ENCODE measurements at regions of chr13 and their contacts with region 1.

Region 1: GRCh38 chr13:99374994-99375737 is 68.0 kb upstream of the GPR183 start:
- DNase-seq: no peak
- ATAC-seq: peak; percentile 83
- H3K4me3 ChIP-seq: peak overlapping the region; percentile 33; the same call in 1 of the 2 replicates
- H3K27ac ChIP-seq: peak overlapping the region; percentile 94
- H3K4me1 ChIP-seq: peaks cover 66% of the 10 kb centered on the region
- H3K27me3 ChIP-seq: no peaks in the 10 kb centered on the region
- CTCF ChIP-seq: 0 out of 6 replicates have a peak, but pooled peaks of 1 of the 3 experiments have one; percentile 0
- EP300 ChIP-seq: peak; percentile 85 to 91; a peak in 3 of 4 replicates
- POLR2A ChIP-seq: 0 out of 2 replicates have a peak, but pooled peaks have one; percentile 24
- RAD21 ChIP-seq: no peak

Region 2: GRCh38 chr13:98761126-98761985 is 613.8 kb before region 1 on chr13:
- CTCF ChIA-PET with region 1: no interaction called
- POLR2A ChIA-PET with region 1: no interaction called
- RAD21 ChIA-PET with region 1: no interaction called
- SMC1A ChIA-PET with region 1: no interaction called
- in situ Hi-C with region 1: no loop called
- intact Hi-C with region 1: no loop called
- DNase-seq: peak; percentile 11
- ATAC-seq: peak; percentile 92
- H3K4me3 ChIP-seq: peak overlapping the region; percentile 19; the same call in 1 of the 2 replicates
- H3K27ac ChIP-seq: no peak overlapping the region
- H3K4me1 ChIP-seq: no peaks in the 10 kb centered on the region; the same call in 1 of the 2 replicates
- H3K27me3 ChIP-seq: no peaks in the 10 kb centered on the region; a peak in 1 of 4 replicates
- CTCF ChIP-seq: no peak
- EP300 ChIP-seq: no peak
- POLR2A ChIP-seq: no peak
- RAD21 ChIP-seq: no peak

Region 3: GRCh38 chr13:99301913-99302636 is 73.1 kb before region 1 on chr13:
- CTCF ChIA-PET with region 1: interaction called, 9 read pairs
- POLR2A ChIA-PET with region 1: interaction called, 5 read pairs
- RAD21 ChIA-PET with region 1: interaction called, 28 read pairs
- SMC1A ChIA-PET with region 1: interaction called, 21 read pairs
- in situ Hi-C with region 1: no loop called
- intact Hi-C with region 1: loop called (anchors 2 kb)
- DNase-seq: no peak
- ATAC-seq: peak; percentile 39
- H3K4me3 ChIP-seq: peak overlapping the region; percentile 98
- H3K27ac ChIP-seq: peak overlapping the region; percentile 93
- H3K4me1 ChIP-seq: peaks cover 18% of the 10 kb centered on the region
- H3K27me3 ChIP-seq: no peaks in the 10 kb centered on the region
- CTCF ChIP-seq: no peak
- EP300 ChIP-seq: no peak
- POLR2A ChIP-seq: no peak
- RAD21 ChIP-seq: no peak

Region 4: DNA sequence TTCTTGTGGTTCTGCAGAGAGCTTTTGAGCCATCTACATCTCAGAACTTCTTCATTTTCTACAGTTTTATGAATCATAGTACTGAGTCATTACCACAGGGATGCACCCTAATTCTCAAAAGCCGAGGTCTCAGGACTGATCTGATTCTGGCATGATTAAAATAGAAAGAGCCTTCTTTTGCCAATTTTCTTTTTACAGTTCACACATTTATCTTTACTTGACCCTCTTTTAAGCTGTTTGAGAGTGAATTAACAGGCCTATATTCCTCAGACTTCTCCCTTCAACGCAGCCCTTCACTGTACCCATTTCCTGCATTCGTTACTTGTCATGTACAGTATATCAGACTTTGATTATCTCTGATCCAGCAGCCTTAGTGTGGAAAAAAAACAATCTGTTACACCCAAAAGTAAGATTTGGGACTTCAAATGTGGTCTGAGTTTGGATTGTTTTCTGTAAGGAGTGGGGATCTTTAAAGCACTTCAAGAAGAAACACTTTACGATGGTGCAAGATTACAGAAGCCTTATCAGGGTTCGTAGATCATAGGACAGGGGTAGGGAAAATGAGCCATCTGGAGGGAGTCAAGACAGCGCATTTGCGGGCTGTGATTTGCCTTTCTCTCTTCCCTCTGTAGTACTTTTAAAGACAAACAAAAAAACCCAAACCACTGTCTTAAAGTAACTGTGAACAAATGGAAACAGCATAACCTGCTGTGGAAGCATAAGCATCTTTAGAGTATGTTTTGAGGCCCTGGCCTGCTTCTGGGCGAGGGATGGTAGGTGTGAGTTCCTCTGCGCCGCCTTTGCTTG is 52.7 kb before region 1 on chr13:
- CTCF ChIA-PET with region 1: interaction called, 3 read pairs
- POLR2A ChIA-PET with region 1: interaction called, 4 read pairs
- RAD21 ChIA-PET with region 1: interaction called, 5 read pairs
- SMC1A ChIA-PET with region 1: interaction called, 14 read pairs
- in situ Hi-C with region 1: no loop called
- intact Hi-C with region 1: no loop called
- DNase-seq: peak; percentile 85
- ATAC-seq: peak; percentile 92
- H3K4me3 ChIP-seq: peak overlapping the region; percentile 49
- H3K27ac ChIP-seq: peak overlapping the region; percentile 85
- H3K4me1 ChIP-seq: peaks cover 53% of the 10 kb centered on the region
- H3K27me3 ChIP-seq: no peaks in the 10 kb centered on the region
- CTCF ChIP-seq: no peak
- EP300 ChIP-seq: peak; percentile 55 to 84; a peak in 2 of 4 replicates
- POLR2A ChIP-seq: no peak
- RAD21 ChIP-seq: peak; percentile 21; the same call in 1 of the 2 replicates

Region 5: DNA sequence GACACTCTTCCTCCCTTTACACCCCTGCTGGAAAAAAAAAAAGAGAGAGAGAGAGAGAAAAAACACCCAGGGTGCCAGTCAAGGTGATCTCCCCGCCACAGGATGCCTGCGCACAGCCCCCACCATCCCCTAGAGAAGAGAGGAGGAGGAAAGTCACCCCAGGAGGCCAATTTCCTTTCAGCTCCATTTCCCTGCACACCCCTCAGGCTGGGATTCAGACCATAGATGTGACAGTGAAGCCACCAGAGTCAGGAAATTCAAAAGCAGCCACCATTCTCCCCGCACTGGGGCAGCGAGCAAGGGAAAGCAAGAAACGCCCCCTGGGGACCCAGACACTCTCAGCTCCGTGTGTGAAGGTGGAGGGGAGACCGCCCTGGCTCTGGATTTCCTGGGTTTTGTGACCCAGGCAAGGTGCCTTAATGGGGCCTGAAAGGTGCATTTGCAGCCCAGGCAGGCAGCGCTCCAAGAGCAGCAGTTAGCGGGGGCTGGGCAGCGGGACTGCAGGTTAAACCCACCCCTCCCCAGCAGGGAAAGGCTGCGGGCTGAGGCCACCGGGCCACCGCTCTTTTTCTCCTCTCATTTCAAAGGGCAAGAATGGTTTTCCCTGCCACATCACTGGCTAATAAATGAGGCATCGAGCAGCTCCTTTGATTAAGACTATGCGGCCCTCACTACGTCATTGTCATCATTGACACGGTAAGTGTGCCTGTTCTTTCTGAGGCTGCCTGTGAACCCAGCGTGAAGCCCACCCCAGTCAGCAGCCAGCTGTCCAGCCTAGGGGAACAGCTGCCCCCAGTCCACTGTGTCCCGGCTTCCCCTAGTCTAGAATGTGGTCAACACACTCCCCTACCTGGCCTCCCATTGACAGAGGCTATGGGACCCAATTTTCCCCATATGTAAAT is 42.3 kb after region 1 on chr13:
- CTCF ChIA-PET with region 1: interaction called, 10 read pairs
- POLR2A ChIA-PET with region 1: interaction called, 3 read pairs
- RAD21 ChIA-PET with region 1: interaction called, 6 read pairs
- SMC1A ChIA-PET with region 1: interaction called, 3 read pairs
- in situ Hi-C with region 1: no loop called
- intact Hi-C with region 1: no loop called
- DNase-seq: no peak
- ATAC-seq: no peak
- H3K4me3 ChIP-seq: no peak overlapping the region
- H3K27ac ChIP-seq: no peak overlapping the region
- H3K4me1 ChIP-seq: peaks cover 40% of the 10 kb centered on the region
- H3K27me3 ChIP-seq: no peaks in the 10 kb centered on the region
- CTCF ChIP-seq: no peak
- EP300 ChIP-seq: no peak
- POLR2A ChIP-seq: no peak
- RAD21 ChIP-seq: no peak

Region 6: GRCh38 chr13:99606324-99607066 is 231.3 kb after region 1 on chr13:
- CTCF ChIA-PET with region 1: no interaction called
- POLR2A ChIA-PET with region 1: no interaction called
- RAD21 ChIA-PET with region 1: no interaction called
- SMC1A ChIA-PET with region 1: no interaction called
- in situ Hi-C with region 1: no loop called
- intact Hi-C with region 1: loop called (anchors 10 kb)
- DNase-seq: no peak
- ATAC-seq: peak; percentile 94
- H3K4me3 ChIP-seq: peak within 1 kb of the TSS; percentile 92
- H3K27ac ChIP-seq: peak within 1 kb of the TSS; percentile 83
- H3K4me1 ChIP-seq: peaks cover 7% of the 10 kb centered on the region
- H3K27me3 ChIP-seq: no peaks in the 10 kb centered on the region
- CTCF ChIP-seq: no peak
- EP300 ChIP-seq: no peak
- POLR2A ChIP-seq: peak; percentile 94
- RAD21 ChIP-seq: no peak

Measured in GM12878 (cell line).